A549 (cell line): ENCODE measurements at regions of chr10 and their contacts with region 1.

Region 1: GRCh38 chr10:987870-988666 is at the start of gene GTPBP4:
- DNase-seq: peak; percentile 98
- ATAC-seq: peak; percentile 97 to 98
- H3K4me3 ChIP-seq: peak within 1 kb of the TSS; percentile 89
- H3K27ac ChIP-seq: peak within 1 kb of the TSS; percentile 93 to 94
- H3K4me1 ChIP-seq: peaks cover 29% of the 10 kb centered on the region
- CTCF ChIP-seq: peak; percentile 53
- EP300 ChIP-seq: no peak
- POLR2A ChIP-seq: peak; percentile 45
- RAD21 ChIP-seq: no peak
- polyA plus RNA-seq, gene GTPBP4: 60.7 and 104 TPM in 2 replicates

Region 2: GRCh38 chr10:819326-819725 is 168.7 kb before region 1 on chr10:
- CTCF ChIA-PET with region 1: no interaction called
- POLR2A ChIA-PET with region 1: no interaction called
- DNase-seq: no peak
- ATAC-seq: no peak
- H3K4me3 ChIP-seq: no peak overlapping the region
- H3K27ac ChIP-seq: no peak overlapping the region
- H3K4me1 ChIP-seq: no peaks in the 10 kb centered on the region
- CTCF ChIP-seq: no peak
- EP300 ChIP-seq: no peak
- POLR2A ChIP-seq: no peak
- RAD21 ChIP-seq: no peak

Region 3: DNA sequence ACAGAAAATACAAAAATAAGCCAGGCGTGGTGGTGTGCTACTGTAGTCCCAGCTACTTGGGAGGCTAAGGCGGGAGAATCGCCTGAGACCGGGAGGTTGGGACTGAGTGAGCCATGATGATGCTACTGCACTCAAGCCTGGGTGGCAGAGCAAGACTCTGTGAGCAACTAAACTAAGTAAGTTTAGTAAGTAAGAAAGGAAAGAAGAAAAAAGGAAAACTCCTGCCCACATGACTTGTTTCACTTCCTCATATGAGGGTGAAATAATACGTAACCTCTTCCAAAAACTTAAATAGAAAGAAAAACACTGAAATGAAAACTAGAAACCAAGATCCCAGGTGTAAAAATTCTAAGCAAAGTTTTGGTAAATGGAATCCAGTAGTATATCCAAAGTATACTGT is 136.2 kb before region 1 on chr10:
- CTCF ChIA-PET with region 1: no interaction called
- POLR2A ChIA-PET with region 1: no interaction called
- DNase-seq: no peak
- ATAC-seq: no peak
- H3K4me3 ChIP-seq: no peak overlapping the region
- H3K27ac ChIP-seq: no peak overlapping the region
- H3K4me1 ChIP-seq: no peaks in the 10 kb centered on the region
- CTCF ChIP-seq: no peak
- EP300 ChIP-seq: no peak
- POLR2A ChIP-seq: no peak
- RAD21 ChIP-seq: no peak

Region 4: GRCh38 chr10:931416-932318 is 56.4 kb before region 1 on chr10 and contains the start of gene LARP4B:
- CTCF ChIA-PET with region 1: interaction called, 3 read pairs
- POLR2A ChIA-PET with region 1: interaction called, 25 read pairs
- DNase-seq: peak; percentile 92 to 99
- ATAC-seq: peak; percentile 92 to 96
- H3K4me3 ChIP-seq: peak within 1 kb of the TSS; percentile 99
- H3K27ac ChIP-seq: peak within 1 kb of the TSS; percentile 100
- H3K4me1 ChIP-seq: peaks cover 41% of the 10 kb centered on the region; the same call in 2 of the 3 replicates
- CTCF ChIP-seq: no peak
- EP300 ChIP-seq: no peak
- POLR2A ChIP-seq: peak; percentile 41
- RAD21 ChIP-seq: no peak
- polyA plus RNA-seq, gene LARP4B: 53.7 and 54.2 TPM in 2 replicates

Region 5: DNA sequence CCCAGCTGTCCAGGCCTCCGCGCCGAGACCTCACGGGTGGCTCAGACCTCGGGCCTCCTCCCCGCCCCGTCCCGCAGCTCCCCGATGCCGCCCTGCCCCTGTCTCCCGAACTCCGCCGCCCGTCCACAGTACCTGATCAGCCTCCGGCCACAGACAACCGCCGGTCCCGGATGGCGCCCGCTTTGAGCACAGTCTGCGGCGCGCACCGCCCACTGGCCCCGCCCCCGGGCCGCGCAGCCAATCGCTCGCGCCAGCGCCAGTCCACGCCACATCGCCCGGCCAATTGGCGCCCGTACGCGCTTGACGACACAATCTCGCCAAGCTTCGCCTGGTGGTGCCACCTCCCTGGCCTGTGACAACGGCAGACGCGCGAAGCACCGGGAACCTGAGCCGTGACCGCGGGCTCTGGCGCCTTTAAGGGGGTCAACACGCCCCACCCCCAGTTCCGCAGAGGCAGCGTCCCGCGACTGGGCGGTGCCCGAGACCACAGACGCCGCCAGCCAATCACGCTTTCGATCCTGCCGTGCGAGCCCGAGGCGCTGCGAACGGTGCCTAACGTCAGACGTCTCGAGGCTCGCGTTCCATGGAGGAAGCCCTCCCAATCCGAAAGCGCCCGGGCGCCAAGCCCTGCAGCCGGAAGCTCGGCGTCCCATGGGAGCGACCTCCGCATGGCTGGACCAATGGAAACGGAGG is 60.8 kb after region 1 on chr10 and contains the start of gene IDI1:
- CTCF ChIA-PET with region 1: no interaction called
- POLR2A ChIA-PET with region 1: interaction called, 23 read pairs
- DNase-seq: peak; percentile 97 to 98
- ATAC-seq: peak; percentile 90 to 93
- H3K4me3 ChIP-seq: peak within 1 kb of the TSS; percentile 88
- H3K27ac ChIP-seq: peak within 1 kb of the TSS; percentile 90 to 91
- H3K4me1 ChIP-seq: peaks cover 28% of the 10 kb centered on the region
- CTCF ChIP-seq: no peak
- EP300 ChIP-seq: no peak
- POLR2A ChIP-seq: peak; percentile 92
- RAD21 ChIP-seq: no peak
- polyA plus RNA-seq, gene IDI1: 38.2 and 55.8 TPM in 2 replicates